ENCODE measurements at regions of chr11 and their contacts with region 1.

Region 1: DNA sequence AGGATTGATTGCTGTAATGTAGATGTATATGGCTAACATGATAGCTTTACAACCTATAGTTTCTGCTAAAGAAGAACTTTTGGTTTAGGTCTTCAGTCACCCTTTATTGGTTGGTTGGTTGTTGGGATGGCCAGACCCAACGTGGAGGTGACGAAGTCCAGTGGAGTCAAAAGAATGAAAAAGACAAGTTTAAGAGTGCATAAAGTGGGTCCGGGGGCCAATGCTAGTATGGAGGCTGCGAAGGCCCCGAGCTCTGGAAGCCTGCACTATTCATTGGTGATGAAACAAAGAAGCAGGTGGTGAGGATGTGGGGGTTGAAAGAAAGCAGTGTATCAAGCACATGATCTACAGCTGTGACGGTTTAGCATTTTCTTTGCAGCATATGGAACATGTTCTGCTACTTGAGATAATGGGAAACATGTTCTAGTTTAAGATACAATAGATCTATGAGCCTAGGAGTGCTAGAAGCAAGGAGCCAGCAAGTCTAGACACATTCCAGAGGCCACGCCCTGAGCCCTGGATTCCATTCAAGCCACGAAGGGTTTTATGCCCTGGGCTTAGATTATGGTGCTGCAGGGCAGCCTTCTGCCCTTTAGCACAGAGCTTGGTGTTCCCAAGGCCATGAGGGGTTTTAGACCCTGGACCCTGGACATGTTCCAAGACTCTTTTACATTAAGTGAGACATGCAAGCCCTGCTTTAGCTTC is 6.3 kb downstream of the TCP11L1 start:
- DNase-seq: peak; percentile 81
- H3K4me3 Mint-ChIP-seq: no peak overlapping the region
- H3K27ac Mint-ChIP-seq: peak overlapping the region; percentile 76
- H3K4me1 Mint-ChIP-seq: peaks cover 38% of the 10 kb centered on the region
- H3K27me3 Mint-ChIP-seq: no peaks in the 10 kb centered on the region
- CTCF ChIP-seq: no peak

Region 2: GRCh38 chr11:33015621-33016551 is 29.8 kb before region 1 on chr11 and contains the start of gene DEPDC7:
- CTCF ChIA-PET with region 1: no interaction called
- POLR2A ChIA-PET with region 1: interaction called, 13 read pairs
- intact Hi-C with region 1: no loop called
- DNase-seq: peak; percentile 72
- H3K4me3 Mint-ChIP-seq: peak within 1 kb of the TSS; percentile 78
- H3K27ac Mint-ChIP-seq: peak within 1 kb of the TSS; percentile 24
- H3K4me1 Mint-ChIP-seq: no peaks in the 10 kb centered on the region
- H3K27me3 Mint-ChIP-seq: no peaks in the 10 kb centered on the region
- CTCF ChIP-seq: no peak
- total RNA-seq, gene DEPDC7: 2.2 and 3.6 TPM in 2 replicates

Region 3: GRCh38 chr11:33060271-33060670 is 14.6 kb after region 1 on chr11:
- CTCF ChIA-PET with region 1: interaction called, 103 read pairs
- POLR2A ChIA-PET with region 1: interaction called, 99 read pairs
- intact Hi-C with region 1: loop called (anchors 2 kb)
- DNase-seq: no peak
- H3K4me3 Mint-ChIP-seq: no peak overlapping the region
- H3K27ac Mint-ChIP-seq: peak overlapping the region; percentile 97
- H3K4me1 Mint-ChIP-seq: peaks cover 56% of the 10 kb centered on the region
- H3K27me3 Mint-ChIP-seq: no peaks in the 10 kb centered on the region
- CTCF ChIP-seq: no peak

Region 4: GRCh38 chr11:33147559-33147958 is 101.9 kb after region 1 on chr11:
- CTCF ChIA-PET with region 1: no interaction called
- POLR2A ChIA-PET with region 1: no interaction called
- intact Hi-C with region 1: no loop called
- DNase-seq: peak; percentile 58
- H3K4me3 Mint-ChIP-seq: no peak overlapping the region
- H3K27ac Mint-ChIP-seq: no peak overlapping the region
- H3K4me1 Mint-ChIP-seq: no peaks in the 10 kb centered on the region
- H3K27me3 Mint-ChIP-seq: no peaks in the 10 kb centered on the region
- CTCF ChIP-seq: no peak

Region 5: GRCh38 chr11:33242575-33242974 is 196.9 kb after region 1 on chr11:
- CTCF ChIA-PET with region 1: no interaction called
- POLR2A ChIA-PET with region 1: no interaction called
- intact Hi-C with region 1: no loop called
- DNase-seq: no peak
- H3K4me3 Mint-ChIP-seq: no peak overlapping the region
- H3K27ac Mint-ChIP-seq: no peak overlapping the region
- H3K4me1 Mint-ChIP-seq: peaks cover 7% of the 10 kb centered on the region
- H3K27me3 Mint-ChIP-seq: no peaks in the 10 kb centered on the region
- CTCF ChIP-seq: no peak

Measured in MCF 10A (cell line).